SK-N-SH (cell line): ENCODE measurements at regions of chr10 and their contacts with region 1.

Region 1: GRCh38 chr10:55091691-55092328 is 290.8 kb upstream of the PCDH15 start:
- DNase-seq: peak; percentile 6
- H3K4me3 ChIP-seq: no peak overlapping the region; a peak in 1 of 4 replicates
- H3K27ac ChIP-seq: no peak overlapping the region
- H3K4me1 ChIP-seq: no peaks in the 10 kb centered on the region; a peak in 1 of 4 replicates
- H3K27me3 ChIP-seq: no peaks in the 10 kb centered on the region
- CTCF ChIP-seq: peak; percentile 97
- EP300 ChIP-seq: no peak
- RAD21 ChIP-seq: peak; percentile 91

Region 2: GRCh38 chr10:55078121-55078520 is 13.7 kb before region 1 on chr10:
- CTCF ChIA-PET with region 1: interaction called, 18 read pairs
- POLR2A ChIA-PET with region 1: no interaction called
- DNase-seq: no peak
- H3K4me3 ChIP-seq: no peak overlapping the region
- H3K27ac ChIP-seq: no peak overlapping the region
- H3K4me1 ChIP-seq: no peaks in the 10 kb centered on the region
- H3K27me3 ChIP-seq: no peaks in the 10 kb centered on the region
- CTCF ChIP-seq: no peak
- EP300 ChIP-seq: no peak
- RAD21 ChIP-seq: no peak

Region 3: DNA sequence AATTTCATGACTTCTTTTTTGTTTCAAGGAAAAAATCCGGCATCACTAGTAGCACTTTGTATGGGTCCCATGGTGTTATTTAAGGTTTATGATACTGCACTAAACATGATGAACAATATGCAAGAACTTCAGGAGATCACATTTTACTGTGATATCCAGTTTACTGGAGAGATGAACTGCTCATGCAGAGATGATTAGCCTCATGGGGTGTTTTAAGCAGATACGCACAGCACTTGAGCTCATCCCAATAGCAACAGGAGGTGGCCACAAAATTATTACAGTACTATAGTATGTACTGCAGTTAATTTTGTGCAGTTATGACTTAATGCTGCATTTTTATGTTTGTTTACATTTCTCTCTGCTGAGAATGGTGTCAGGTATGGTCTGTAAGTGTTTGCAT is 12.9 kb after region 1 on chr10:
- CTCF ChIA-PET with region 1: interaction called, 14 read pairs
- POLR2A ChIA-PET with region 1: no interaction called
- DNase-seq: no peak
- H3K4me3 ChIP-seq: no peak overlapping the region
- H3K27ac ChIP-seq: no peak overlapping the region
- H3K4me1 ChIP-seq: no peaks in the 10 kb centered on the region
- H3K27me3 ChIP-seq: no peaks in the 10 kb centered on the region
- CTCF ChIP-seq: no peak
- EP300 ChIP-seq: no peak
- RAD21 ChIP-seq: no peak

Region 4: DNA sequence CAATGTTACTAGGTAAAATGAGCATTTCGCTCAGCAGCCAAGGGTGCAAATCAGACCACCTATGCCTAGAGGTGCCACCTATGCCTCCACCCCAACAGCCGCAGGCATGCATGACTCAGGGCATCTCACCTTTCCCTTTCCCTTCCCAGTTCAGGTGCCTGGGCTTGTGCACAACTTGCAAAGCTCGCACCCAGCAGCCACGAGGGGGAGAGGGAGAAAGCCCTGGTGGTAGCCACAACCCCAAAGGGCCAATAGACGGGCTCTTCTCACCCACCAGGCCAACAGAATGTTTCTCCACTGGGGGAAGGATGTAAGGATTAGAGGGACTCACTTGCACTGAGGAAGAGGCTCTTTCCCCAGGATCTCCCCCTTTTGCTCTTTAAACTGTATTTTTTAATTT is 171.5 kb after region 1 on chr10:
- CTCF ChIA-PET with region 1: interaction called, 17 read pairs
- POLR2A ChIA-PET with region 1: no interaction called
- DNase-seq: no peak
- H3K4me3 ChIP-seq: no peak overlapping the region
- H3K27ac ChIP-seq: no peak overlapping the region
- H3K4me1 ChIP-seq: no peaks in the 10 kb centered on the region; a peak in 1 of 4 replicates
- H3K27me3 ChIP-seq: no peaks in the 10 kb centered on the region
- CTCF ChIP-seq: no peak
- EP300 ChIP-seq: no peak
- RAD21 ChIP-seq: no peak

Region 5: GRCh38 chr10:55410415-55410885 is 318.6 kb after region 1 on chr10:
- CTCF ChIA-PET with region 1: interaction called, 22 read pairs
- POLR2A ChIA-PET with region 1: no interaction called
- DNase-seq: peak; percentile 51
- H3K4me3 ChIP-seq: peak overlapping the region; percentile 17 to 18; a peak in 1 of 4 replicates
- H3K27ac ChIP-seq: peak overlapping the region; percentile 50 to 98
- H3K4me1 ChIP-seq: peaks cover 5 to 13% of the 10 kb centered on the region in 2 experiments; a peak in 2 of 4 replicates
- H3K27me3 ChIP-seq: no peaks in the 10 kb centered on the region
- CTCF ChIP-seq: peak; percentile 52
- EP300 ChIP-seq: peak in 1 of 2 experiments; percentile 89; a peak in 3 of 4 replicates
- RAD21 ChIP-seq: peak; percentile 91

Region 6: GRCh38 chr10:55631071-55631654 is 539.4 kb after region 1 on chr10:
- CTCF ChIA-PET with region 1: interaction called, 53 read pairs
- POLR2A ChIA-PET with region 1: no interaction called
- DNase-seq: peak; percentile 88
- H3K4me3 ChIP-seq: peak overlapping the region; percentile 66 to 72
- H3K27ac ChIP-seq: peak overlapping the region in 1 of 2 experiments; percentile 77; a peak in 2 of 4 replicates
- H3K4me1 ChIP-seq: peaks cover 0 to 7% of the 10 kb centered on the region in 2 experiments; a peak in 2 of 4 replicates
- H3K27me3 ChIP-seq: peaks cover 8% of the 10 kb centered on the region
- CTCF ChIP-seq: peak; percentile 66
- EP300 ChIP-seq: no peak
- RAD21 ChIP-seq: peak; percentile 83